Activated CD4-positive, alpha-beta T cell treated with anti-CD3 and anti-CD28 coated beads for 36 hours (primary cell): ENCODE measurements at regions of chr1 and their contacts with region 1.

Region 1: GRCh38 chr1:116737020-116737854 is 17.0 kb upstream of the CD2 start:
- DNase-seq: peak; percentile 86
- ATAC-seq: peak; percentile 56
- H3K4me3 Mint-ChIP-seq: peak overlapping the region; percentile 71
- H3K27ac Mint-ChIP-seq: peak overlapping the region; percentile 98
- H3K4me1 Mint-ChIP-seq: peaks cover 57% of the 10 kb centered on the region
- H3K27me3 Mint-ChIP-seq: no peaks in the 10 kb centered on the region

Region 2: GRCh38 chr1:116504308-116505156 is 232.7 kb before region 1 on chr1:
- CTCF ChIA-PET with region 1: no interaction called
- POLR2A ChIA-PET with region 1: no interaction called
- intact Hi-C with region 1: no loop called
- DNase-seq: peak; percentile 89
- ATAC-seq: peak; percentile 86
- H3K4me3 Mint-ChIP-seq: peak overlapping the region; percentile 31
- H3K27ac Mint-ChIP-seq: peak overlapping the region; percentile 94
- H3K4me1 Mint-ChIP-seq: peaks cover 60% of the 10 kb centered on the region
- H3K27me3 Mint-ChIP-seq: no peaks in the 10 kb centered on the region

Region 3: GRCh38 chr1:116693759-116694482 is 43.3 kb before region 1 on chr1:
- CTCF ChIA-PET with region 1: no interaction called
- POLR2A ChIA-PET with region 1: no interaction called
- intact Hi-C with region 1: no loop called
- DNase-seq: peak; percentile 8
- ATAC-seq: no peak
- H3K4me3 Mint-ChIP-seq: no peak overlapping the region
- H3K27ac Mint-ChIP-seq: no peak overlapping the region
- H3K4me1 Mint-ChIP-seq: no peaks in the 10 kb centered on the region
- H3K27me3 Mint-ChIP-seq: peaks cover 2% of the 10 kb centered on the region

Region 4: GRCh38 chr1:116724765-116725375 is 12.4 kb before region 1 on chr1:
- CTCF ChIA-PET with region 1: interaction called, 22 read pairs
- POLR2A ChIA-PET with region 1: interaction called, 4 read pairs
- intact Hi-C with region 1: no loop called
- DNase-seq: peak; percentile 91
- ATAC-seq: peak; percentile 86
- H3K4me3 Mint-ChIP-seq: no peak overlapping the region
- H3K27ac Mint-ChIP-seq: peak overlapping the region; percentile 26
- H3K4me1 Mint-ChIP-seq: peaks cover 32% of the 10 kb centered on the region
- H3K27me3 Mint-ChIP-seq: no peaks in the 10 kb centered on the region

Region 5: GRCh38 chr1:116769561-116769977 is 32.3 kb after region 1 on chr1:
- CTCF ChIA-PET with region 1: interaction called, 213 read pairs
- POLR2A ChIA-PET with region 1: interaction called, 482 read pairs
- intact Hi-C with region 1: loop called (anchors 1 kb)
- DNase-seq: peak; percentile 86
- ATAC-seq: peak; percentile 53
- H3K4me3 Mint-ChIP-seq: peak overlapping the region; percentile 93
- H3K27ac Mint-ChIP-seq: peak overlapping the region; percentile 100
- H3K4me1 Mint-ChIP-seq: peaks cover 96% of the 10 kb centered on the region
- H3K27me3 Mint-ChIP-seq: no peaks in the 10 kb centered on the region

Region 6: DNA sequence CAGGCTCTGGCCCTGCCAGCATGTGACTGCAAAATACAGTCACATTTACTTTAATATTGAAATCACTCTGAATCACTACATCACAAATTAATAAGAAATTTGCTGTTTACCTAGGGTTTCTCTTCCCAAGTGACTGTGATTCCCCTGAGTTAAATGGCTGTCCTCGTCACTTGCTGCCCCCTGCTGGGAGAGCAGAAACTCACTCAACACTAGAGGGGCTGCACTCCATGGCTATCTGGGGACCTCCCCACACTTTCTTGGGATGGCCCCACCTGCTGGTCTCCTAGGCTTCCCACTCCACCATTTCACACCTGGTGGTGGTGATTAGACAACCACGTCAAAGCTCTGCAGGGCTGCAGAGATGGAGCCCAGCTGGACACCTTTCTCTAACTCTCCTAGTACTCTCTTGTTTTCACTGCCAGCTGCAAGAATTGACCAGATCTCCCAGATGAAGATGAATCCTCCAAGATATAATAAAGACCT is 80.4 kb after region 1 on chr1:
- CTCF ChIA-PET with region 1: interaction called, 25 read pairs
- POLR2A ChIA-PET with region 1: interaction called, 33 read pairs
- intact Hi-C with region 1: loop called (anchors 1 kb)
- DNase-seq: peak; percentile 88
- ATAC-seq: peak; percentile 65
- H3K4me3 Mint-ChIP-seq: peak overlapping the region; percentile 44
- H3K27ac Mint-ChIP-seq: peak overlapping the region; percentile 91
- H3K4me1 Mint-ChIP-seq: peaks cover 59% of the 10 kb centered on the region
- H3K27me3 Mint-ChIP-seq: no peaks in the 10 kb centered on the region

Region 7: DNA sequence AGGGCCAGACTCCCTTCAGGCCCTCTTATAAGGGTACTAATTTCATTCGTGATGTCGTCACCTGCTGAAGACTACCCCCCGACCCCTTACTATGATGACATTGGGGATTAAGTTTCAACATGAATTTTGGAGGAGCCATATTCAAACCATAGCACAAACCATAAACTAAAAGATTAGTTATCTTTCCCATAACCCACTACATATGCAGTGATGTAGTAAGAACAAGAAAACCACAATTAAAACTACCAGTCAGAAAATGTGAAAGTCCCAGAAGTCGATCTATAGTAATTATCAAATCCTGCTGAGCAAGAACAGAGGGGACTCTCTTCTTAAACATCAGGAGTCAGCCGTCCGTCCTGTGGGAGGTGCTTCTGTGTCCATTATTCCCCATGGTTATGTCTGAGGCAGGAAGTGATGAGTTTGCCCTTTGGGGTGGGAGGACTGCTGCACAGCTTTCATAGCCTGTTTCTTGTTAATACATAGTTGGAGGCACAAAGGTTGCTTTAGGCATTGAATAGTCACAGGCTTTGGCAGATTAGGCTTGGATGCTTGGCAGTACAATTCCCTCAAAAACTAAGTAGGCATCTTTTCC is 136.5 kb after region 1 on chr1:
- CTCF ChIA-PET with region 1: interaction called, 5 read pairs
- POLR2A ChIA-PET with region 1: no interaction called
- intact Hi-C with region 1: loop called (anchors 1 to 5 kb)
- DNase-seq: peak; percentile 52
- ATAC-seq: peak; percentile 73
- H3K4me3 Mint-ChIP-seq: no peak overlapping the region
- H3K27ac Mint-ChIP-seq: peak overlapping the region; percentile 5
- H3K4me1 Mint-ChIP-seq: peaks cover 33% of the 10 kb centered on the region
- H3K27me3 Mint-ChIP-seq: no peaks in the 10 kb centered on the region

Region 8: GRCh38 chr1:117001254-117001927 is 264.2 kb after region 1 on chr1 and contains the start of gene CD101:
- CTCF ChIA-PET with region 1: interaction called, 3 read pairs
- POLR2A ChIA-PET with region 1: no interaction called
- intact Hi-C with region 1: loop called (anchors 1 to 2 kb)
- DNase-seq: peak; percentile 70
- ATAC-seq: peak; percentile 95
- H3K4me3 Mint-ChIP-seq: peak within 1 kb of the TSS; percentile 3
- H3K27ac Mint-ChIP-seq: peak within 1 kb of the TSS; percentile 66
- H3K4me1 Mint-ChIP-seq: peaks cover 53% of the 10 kb centered on the region
- H3K27me3 Mint-ChIP-seq: peaks cover 3% of the 10 kb centered on the region
- total RNA-seq, gene CD101: 0.30 to 0.60 TPM

Region 9: DNA sequence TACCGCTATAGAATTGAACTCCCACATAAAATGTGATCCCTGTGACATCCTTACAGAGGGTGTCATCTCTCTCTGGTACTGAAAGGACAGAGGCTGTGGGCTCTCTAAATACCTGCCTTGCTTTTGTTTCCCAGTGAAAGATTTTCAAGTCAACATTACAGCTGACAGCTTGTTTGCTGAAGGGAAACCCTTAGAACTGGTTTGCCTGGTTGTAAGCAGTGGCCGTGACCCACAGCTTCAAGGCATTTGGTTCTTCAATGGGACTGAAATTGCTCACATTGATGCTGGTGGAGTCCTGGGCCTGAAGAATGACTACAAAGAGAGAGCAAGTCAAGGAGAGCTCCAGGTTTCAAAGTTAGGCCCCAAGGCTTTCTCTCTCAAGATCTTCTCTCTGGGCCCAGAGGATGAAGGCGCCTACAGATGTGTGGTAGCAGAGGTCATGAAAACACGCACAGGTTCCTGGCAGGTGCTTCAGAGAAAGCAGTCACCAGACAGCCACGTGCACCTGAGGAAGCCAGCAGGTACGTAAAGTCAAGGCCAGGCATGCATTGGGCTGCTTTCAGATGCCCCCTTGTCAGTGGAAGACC is 276.1 kb after region 1 on chr1:
- CTCF ChIA-PET with region 1: no interaction called
- POLR2A ChIA-PET with region 1: no interaction called
- intact Hi-C with region 1: no loop called
- DNase-seq: peak; percentile 14
- ATAC-seq: peak; percentile 20
- H3K4me3 Mint-ChIP-seq: no peak overlapping the region
- H3K27ac Mint-ChIP-seq: no peak overlapping the region
- H3K4me1 Mint-ChIP-seq: peaks cover 66% of the 10 kb centered on the region
- H3K27me3 Mint-ChIP-seq: no peaks in the 10 kb centered on the region